Esophagus muscularis mucosa (tissue), 4 donors: ENCODE measurements at regions of chr10 and their contacts with region 1.

Region 1: GRCh38 chr10:10798102-10798863 is 219.4 kb upstream of the CELF2 start:
- DNase-seq: no peak
- H3K4me3 ChIP-seq: peak overlapping the region; percentile 38 to 58 (median 48)
- H3K27ac ChIP-seq: peak overlapping the region; percentile 83 to 89 (median 84)
- H3K4me1 ChIP-seq: peaks cover 10 to 90% (median 74%) of the 10 kb centered on the region in 4 donors
- H3K27me3 ChIP-seq: no peaks in the 10 kb centered on the region
- CTCF ChIP-seq: no peak
- EP300 ChIP-seq: no peak
- POLR2A ChIP-seq: no peak

Region 2: DNA sequence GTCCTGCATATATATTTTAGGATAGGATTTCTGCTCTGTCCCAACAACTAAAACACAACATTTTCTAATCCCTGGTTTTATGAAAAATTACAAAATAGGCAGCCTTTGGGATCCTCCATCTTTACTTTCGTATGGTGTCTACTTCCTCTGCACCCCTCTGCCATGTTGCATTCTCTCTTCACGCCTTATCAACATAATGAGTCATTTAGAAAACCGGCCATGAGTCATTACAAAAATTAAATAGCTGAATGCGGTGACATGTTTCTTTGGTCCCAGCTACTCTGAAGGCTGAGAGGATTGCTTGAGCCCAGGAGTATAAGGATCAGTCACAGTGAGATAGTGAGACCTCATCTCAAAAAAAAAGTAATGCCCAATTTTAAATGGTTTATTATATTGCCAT is 71.3 kb after region 1 on chr10:
- intact Hi-C with region 1: loop called (anchors 5 kb)
- DNase-seq: no peak
- H3K4me3 ChIP-seq: no peak overlapping the region
- H3K27ac ChIP-seq: no peak overlapping the region
- H3K4me1 ChIP-seq: peaks cover 23 to 34% (median 28%) of the 10 kb centered on the region in 4 donors
- H3K27me3 ChIP-seq: no peaks in the 10 kb centered on the region
- CTCF ChIP-seq: no peak
- EP300 ChIP-seq: no peak
- POLR2A ChIP-seq: no peak